Activated CD8-positive, alpha-beta memory T cell treated with anti-CD3 and anti-CD28 coated beads, Interleukin-2, amount 10 ng/mL, durations not matched to agents 7 days and 5 days (primary cell): ENCODE measurements at regions of chr3 and their contacts with region 1.

Region 1: DNA sequence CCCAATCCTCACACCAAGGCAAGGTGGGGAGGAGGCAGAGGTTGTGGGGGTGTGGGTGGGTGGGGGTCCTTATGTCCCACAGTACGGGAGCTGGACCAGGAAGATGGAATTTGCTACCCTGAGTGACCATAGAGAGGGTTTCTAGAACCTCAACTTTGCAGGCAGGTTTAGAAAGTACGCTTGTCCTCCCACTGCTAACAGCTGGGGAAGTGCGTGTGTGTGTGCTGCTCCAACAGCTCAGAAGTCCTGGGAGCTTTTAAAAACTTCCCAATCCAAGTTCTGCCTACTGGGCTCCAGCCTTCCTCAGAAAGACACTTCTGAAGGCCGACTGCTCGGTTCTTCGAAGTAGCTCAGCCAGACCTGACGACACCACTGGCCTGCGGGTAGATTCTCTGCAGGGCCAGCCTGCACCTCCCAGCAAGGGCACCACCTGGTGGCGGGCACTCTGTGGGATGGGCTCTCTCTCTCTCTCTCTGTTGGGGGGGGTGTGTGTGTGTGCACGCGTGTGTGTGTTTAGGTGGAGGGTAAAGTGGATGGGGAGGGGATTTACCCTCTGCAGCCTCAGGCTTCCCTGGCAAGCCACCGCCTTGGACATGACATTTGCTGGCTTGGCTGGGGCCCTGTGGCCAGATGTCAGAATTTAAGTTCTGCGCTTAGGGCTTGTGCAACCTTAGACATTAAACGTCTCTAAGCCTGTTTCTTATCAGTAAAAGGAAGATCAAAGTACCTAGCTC is 15.6 kb downstream of the TMEM158 start:
- DNase-seq: peak; percentile 88
- ATAC-seq: peak; percentile 93
- H3K4me3 Mint-ChIP-seq: no peak overlapping the region
- H3K27ac Mint-ChIP-seq: no peak overlapping the region
- H3K4me1 Mint-ChIP-seq: peaks cover 36% of the 10 kb centered on the region
- H3K27me3 Mint-ChIP-seq: peaks cover 31% of the 10 kb centered on the region

Region 2: DNA sequence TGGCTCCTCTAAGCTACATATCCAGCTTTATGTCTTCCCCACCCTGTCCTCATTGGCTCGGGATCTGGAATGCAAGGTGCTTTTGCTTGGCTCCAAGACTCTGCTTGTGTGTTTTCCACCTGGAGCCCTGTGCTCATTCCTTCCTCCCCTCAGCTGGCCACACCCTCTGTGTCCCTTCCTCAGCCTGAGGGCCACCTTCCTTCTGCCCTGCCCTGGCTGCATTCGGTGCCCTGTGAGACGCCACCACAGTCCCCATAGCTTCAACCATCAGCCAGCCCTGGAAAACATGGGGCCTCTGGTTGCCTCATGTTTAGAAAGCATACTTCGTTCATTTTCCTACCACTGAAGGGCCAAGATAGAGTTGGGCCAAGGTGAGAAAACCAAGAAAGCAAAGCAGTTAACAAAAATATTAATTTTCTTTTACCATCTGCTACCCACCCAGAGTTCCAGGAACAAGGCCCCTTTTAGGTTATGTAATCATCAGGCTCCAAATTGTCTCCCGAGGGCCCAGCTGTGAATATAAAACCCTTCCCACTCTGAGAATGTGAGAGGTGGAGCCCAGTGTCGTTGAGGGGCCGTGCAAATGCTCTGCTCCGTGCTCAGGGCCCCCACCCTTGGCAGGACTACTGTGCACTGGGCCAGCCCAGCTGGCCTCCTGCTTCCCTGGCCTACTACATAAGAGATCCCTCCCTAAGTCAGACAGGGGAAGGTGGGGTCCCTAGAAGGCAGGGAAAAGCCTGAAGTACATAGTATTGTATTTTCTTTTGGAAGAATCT is 189.1 kb before region 1 on chr3:
- CTCF ChIA-PET with region 1: no interaction called
- DNase-seq: no peak
- ATAC-seq: no peak
- H3K4me3 Mint-ChIP-seq: no peak overlapping the region
- H3K27ac Mint-ChIP-seq: no peak overlapping the region
- H3K4me1 Mint-ChIP-seq: peaks cover 12% of the 10 kb centered on the region
- H3K27me3 Mint-ChIP-seq: peaks cover 6% of the 10 kb centered on the region

Region 3: DNA sequence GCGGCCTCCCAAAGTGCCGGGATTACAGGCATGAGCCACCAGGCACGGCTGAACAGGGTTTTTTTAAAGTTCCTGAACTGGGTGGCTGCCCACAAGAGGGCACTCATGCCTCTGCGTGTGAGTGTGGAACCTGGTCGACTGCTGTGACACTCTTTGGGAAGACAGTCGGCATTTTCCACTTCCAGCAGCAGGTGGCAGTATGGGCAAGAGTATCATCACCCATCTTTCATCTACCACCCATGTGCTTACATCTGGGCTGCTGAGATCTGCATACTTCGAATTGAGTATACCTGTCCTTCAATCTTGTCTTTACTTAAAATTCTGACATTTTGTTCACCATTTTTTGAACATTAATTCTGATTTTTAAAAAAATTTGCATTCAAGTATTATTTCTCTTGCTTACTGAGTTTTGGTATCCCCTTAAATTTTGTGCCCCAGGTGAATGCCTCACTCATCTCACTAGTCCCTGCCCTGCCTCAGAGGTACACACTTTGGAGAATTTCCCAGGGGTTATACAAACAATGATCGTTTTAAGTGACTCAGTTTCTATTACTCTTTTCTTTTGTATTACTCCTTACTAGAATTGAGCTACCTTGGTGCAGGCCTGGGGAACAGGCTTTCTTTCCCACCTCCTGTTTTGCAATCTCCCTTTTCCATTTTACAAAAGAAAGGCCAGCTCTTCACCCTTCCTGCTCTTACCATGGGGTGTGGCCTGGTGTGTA is 172.6 kb before region 1 on chr3:
- CTCF ChIA-PET with region 1: interaction called, 296 read pairs
- DNase-seq: peak; percentile 95
- ATAC-seq: peak; percentile 84
- H3K4me3 Mint-ChIP-seq: no peak overlapping the region
- H3K27ac Mint-ChIP-seq: no peak overlapping the region
- H3K4me1 Mint-ChIP-seq: peaks cover 48% of the 10 kb centered on the region
- H3K27me3 Mint-ChIP-seq: peaks cover 28% of the 10 kb centered on the region

Region 4: GRCh38 chr3:45043728-45044299 is 166.7 kb before region 1 on chr3:
- CTCF ChIA-PET with region 1: interaction called, 296 read pairs
- DNase-seq: no peak
- ATAC-seq: no peak
- H3K4me3 Mint-ChIP-seq: no peak overlapping the region
- H3K27ac Mint-ChIP-seq: no peak overlapping the region
- H3K4me1 Mint-ChIP-seq: peaks cover 22% of the 10 kb centered on the region
- H3K27me3 Mint-ChIP-seq: peaks cover 30% of the 10 kb centered on the region

Region 5: DNA sequence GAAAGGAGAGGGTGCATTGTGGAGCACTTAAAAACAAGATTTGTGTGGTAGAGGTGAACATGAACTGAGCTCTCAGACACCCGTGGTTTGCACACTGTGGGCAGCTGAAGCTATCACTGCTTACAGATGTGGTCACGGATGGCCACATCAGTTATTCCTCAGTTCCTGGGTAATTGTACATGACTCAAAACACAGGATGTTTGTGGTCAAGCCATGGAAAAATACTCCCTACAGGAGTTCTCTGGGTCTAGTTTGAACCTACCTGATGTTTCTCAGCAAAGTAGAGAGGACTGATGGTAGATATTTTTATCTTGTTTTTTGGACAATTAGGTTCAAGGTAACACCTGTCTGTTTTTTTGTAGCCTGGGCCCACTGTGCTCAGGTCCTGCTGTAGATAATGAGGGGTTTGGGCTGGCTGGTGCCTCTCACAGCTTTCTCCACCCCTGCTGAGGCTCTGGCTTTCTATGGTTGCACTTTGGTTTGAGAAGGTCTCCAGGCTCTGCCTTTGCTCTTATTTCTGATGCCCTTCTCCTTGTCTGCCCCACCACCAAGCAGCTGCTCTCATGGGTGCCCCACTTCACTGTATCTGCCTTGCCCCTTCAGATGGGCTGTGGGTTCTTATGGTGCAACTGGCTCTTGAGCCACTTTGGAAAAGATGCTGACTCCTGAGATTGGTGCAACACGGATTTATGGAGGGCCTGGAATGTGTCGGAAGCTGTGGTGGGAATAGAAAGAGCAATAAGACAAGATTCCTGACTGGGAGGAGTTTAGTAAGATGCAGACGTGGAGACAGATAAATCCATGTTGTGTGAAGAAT is 104.4 kb before region 1 on chr3:
- CTCF ChIA-PET with region 1: interaction called, 13 read pairs
- DNase-seq: peak; percentile 92
- ATAC-seq: peak; percentile 73
- H3K4me3 Mint-ChIP-seq: peak overlapping the region; percentile 9
- H3K27ac Mint-ChIP-seq: peak overlapping the region; percentile 78
- H3K4me1 Mint-ChIP-seq: peaks cover 76% of the 10 kb centered on the region
- H3K27me3 Mint-ChIP-seq: peaks cover 21% of the 10 kb centered on the region

Region 6: GRCh38 chr3:45123030-45123429 is 87.4 kb before region 1 on chr3:
- CTCF ChIA-PET with region 1: interaction called, 13 read pairs
- DNase-seq: no peak
- ATAC-seq: no peak
- H3K4me3 Mint-ChIP-seq: no peak overlapping the region
- H3K27ac Mint-ChIP-seq: no peak overlapping the region
- H3K4me1 Mint-ChIP-seq: peaks cover 48% of the 10 kb centered on the region
- H3K27me3 Mint-ChIP-seq: peaks cover 32% of the 10 kb centered on the region

Region 7: GRCh38 chr3:45199837-45200648 is 10.4 kb before region 1 on chr3:
- CTCF ChIA-PET with region 1: interaction called, 15 read pairs
- DNase-seq: no peak
- ATAC-seq: no peak
- H3K4me3 Mint-ChIP-seq: no peak overlapping the region
- H3K27ac Mint-ChIP-seq: no peak overlapping the region
- H3K4me1 Mint-ChIP-seq: peaks cover under 1% of the 10 kb centered on the region
- H3K27me3 Mint-ChIP-seq: peaks cover 81% of the 10 kb centered on the region

Region 8: DNA sequence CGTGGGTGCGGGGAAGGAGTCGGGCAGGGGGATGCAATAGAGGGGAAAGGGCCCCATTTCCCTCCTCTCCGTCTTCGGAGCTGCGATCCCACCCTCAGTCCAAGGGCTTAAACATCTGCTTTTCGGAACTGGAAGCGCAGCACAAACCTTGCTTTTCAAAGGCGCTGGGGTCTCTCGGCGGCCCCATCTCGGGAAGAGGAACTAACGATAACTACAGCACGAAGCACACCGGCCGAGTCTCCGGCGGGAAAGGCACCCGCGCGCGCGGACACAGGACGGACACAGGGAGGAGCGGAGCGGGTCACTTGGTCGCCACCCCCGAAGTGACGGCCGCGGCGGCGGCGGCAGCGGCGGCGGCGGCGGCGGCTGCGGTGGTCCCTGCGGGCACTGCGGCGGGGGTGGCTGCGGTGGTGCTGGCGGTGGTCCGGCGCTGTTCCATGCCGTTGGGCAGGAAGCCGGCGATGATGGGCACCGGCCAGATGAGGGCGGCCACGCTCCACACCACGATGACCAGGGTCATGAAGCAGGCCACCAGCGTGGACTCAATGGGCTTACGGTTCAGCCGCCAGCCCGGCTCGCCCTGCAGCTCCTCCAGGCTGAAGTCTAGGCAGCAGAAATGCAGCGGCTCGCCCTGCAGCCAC is 14.5 kb after region 1 on chr3:
- CTCF ChIA-PET with region 1: interaction called, 15 read pairs
- DNase-seq: peak; percentile 47
- ATAC-seq: peak; percentile 41
- H3K4me3 Mint-ChIP-seq: peak overlapping the region; percentile 65
- H3K27ac Mint-ChIP-seq: peak overlapping the region; percentile 63
- H3K4me1 Mint-ChIP-seq: peaks cover 10% of the 10 kb centered on the region
- H3K27me3 Mint-ChIP-seq: peaks cover 81% of the 10 kb centered on the region